ENCODE measurements at regions of chr7 and their contacts with region 1.

Region 1: GRCh38 chr7:55053651-55054571 is 35.1 kb downstream of the EGFR start:
- DNase-seq: no peak

Region 2: GRCh38 chr7:55018361-55019190 is 35.3 kb before region 1 on chr7 and contains the start of gene EGFR:
- intact Hi-C with region 1: loop called (anchors 5 kb)
- DNase-seq: peak; percentile 81
- total RNA-seq, gene EGFR: 7.6 TPM

Region 3: DNA sequence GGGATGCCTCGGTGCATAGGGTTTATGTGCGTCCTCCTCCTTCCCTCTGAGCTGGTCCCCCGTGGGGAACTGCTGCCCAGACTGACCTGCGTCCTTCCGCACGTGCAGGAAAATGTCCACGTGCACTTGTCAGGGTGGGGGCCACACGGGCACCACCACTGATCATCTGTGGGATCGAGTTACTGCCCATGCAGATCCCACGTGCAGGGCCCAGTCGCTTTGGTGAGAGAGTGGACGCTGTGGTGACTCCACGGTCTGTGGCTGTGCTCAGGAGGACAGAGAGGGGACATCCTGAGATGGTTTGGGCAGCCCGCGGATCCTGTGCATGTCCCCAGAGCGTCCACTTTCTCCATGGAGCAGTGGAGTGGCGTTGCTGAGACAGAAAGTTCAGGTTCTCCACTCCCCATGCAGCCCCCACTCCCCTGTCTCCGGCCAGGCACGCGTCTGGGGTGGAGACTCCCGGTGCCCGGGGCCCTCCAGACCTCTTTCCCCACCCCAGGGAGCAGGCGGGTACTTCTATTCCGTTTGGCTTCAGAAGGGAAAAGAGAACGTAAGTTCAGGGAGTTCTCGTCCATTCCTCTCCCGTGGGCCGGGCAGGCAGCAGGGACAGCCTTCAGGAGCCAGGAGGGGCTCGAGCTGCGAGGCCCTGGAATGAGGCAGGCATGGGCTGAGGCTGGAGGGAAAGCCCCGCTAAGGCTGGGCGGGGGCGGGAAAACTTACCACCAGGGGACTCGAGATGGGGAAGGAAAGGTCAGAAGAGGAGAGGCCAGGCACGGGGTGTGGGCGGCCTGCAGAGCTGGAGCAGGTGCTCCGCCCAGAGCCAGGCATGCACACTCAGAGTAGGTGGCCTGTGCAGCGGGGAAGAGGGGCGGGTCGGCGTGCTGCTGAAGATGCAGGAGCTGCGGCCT is 24.8 kb after region 1 on chr7:
- intact Hi-C with region 1: no loop called
- DNase-seq: no peak